IMR-90 (cell line): ENCODE measurements at regions of chr12 and their contacts with region 1.

Region 1: DNA sequence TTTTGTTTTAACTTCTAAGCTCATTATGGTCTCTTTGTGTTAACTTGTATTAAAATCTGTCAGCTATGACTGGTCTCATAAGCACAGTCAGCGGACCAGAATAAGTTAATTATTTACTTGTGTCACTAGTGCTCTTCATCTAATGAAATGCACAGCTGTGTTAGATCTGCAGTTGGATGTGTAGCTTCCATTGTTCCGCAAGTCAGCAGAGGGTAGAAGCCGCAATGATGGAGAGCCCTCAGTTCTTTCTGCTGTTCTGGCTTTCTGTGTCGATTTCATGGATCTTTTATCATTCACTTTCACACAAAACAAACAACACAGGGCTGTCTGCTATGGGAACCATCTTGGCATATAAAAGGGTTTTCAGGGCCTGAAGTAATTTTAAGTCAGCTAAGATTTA is 89.3 kb upstream of the RFX4 start:
- DNase-seq: no peak
- ATAC-seq: no peak
- H3K4me3 ChIP-seq: no peak overlapping the region
- H3K27ac ChIP-seq: no peak overlapping the region
- H3K4me1 ChIP-seq: no peaks in the 10 kb centered on the region
- H3K27me3 ChIP-seq: no peaks in the 10 kb centered on the region
- CTCF ChIP-seq: no peak
- POLR2A ChIP-seq: no peak
- RAD21 ChIP-seq: no peak

Region 2: DNA sequence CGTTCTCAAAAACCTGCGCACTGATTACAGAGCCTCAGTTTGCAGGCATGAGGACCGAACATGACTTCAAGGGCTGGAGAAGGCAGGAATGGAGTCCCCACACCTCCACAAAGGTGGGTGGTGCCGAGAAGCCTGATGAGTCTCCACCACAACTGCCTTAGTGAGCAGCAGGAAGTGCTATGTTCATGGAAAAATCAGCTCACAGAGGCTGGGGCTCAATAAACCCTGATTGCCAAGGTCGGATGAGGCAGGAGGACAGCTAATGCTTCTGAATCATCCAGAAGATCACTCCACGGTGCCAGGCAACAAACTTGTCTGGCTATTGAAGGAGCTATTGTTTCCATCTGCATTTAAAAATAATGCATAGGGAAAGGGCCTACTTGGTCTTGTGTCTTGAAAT is 1288.6 kb before region 1 on chr12:
- CTCF ChIA-PET with region 1: no interaction called
- POLR2A ChIA-PET with region 1: no interaction called
- dilution Hi-C with region 1: no loop called
- in situ Hi-C with region 1: no loop called
- intact Hi-C with region 1: no loop called
- DNase-seq: peak; percentile 84
- ATAC-seq: peak; percentile 40
- H3K4me3 ChIP-seq: no peak overlapping the region
- H3K27ac ChIP-seq: no peak overlapping the region
- H3K4me1 ChIP-seq: peaks cover 12% of the 10 kb centered on the region
- H3K27me3 ChIP-seq: no peaks in the 10 kb centered on the region
- CTCF ChIP-seq: no peak
- POLR2A ChIP-seq: no peak
- RAD21 ChIP-seq: no peak

Region 3: DNA sequence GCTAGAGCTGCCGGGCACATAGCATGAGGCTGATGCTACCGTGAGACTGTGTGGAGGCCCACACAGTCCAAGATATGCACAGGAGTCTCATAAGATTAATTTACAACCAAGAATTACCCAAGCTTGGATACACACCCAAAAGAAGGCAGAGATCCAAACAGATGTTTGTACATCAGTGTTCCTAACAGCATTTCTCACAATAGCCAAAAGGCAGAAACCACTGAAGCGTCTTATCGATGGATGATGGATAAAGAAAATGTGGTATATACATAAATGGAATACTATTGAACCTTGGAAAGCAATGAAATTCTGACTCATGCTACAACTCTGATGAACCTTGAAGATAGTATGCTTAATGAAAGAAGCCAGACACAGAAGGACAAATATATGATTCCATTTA is 240.2 kb after region 1 on chr12:
- CTCF ChIA-PET with region 1: no interaction called
- POLR2A ChIA-PET with region 1: no interaction called
- dilution Hi-C with region 1: no loop called
- in situ Hi-C with region 1: no loop called
- intact Hi-C with region 1: no loop called
- DNase-seq: no peak
- ATAC-seq: no peak
- H3K4me3 ChIP-seq: no peak overlapping the region
- H3K27ac ChIP-seq: no peak overlapping the region
- H3K4me1 ChIP-seq: no peaks in the 10 kb centered on the region
- H3K27me3 ChIP-seq: peaks cover 2% of the 10 kb centered on the region
- CTCF ChIP-seq: no peak
- POLR2A ChIP-seq: no peak
- RAD21 ChIP-seq: no peak

Region 4: DNA sequence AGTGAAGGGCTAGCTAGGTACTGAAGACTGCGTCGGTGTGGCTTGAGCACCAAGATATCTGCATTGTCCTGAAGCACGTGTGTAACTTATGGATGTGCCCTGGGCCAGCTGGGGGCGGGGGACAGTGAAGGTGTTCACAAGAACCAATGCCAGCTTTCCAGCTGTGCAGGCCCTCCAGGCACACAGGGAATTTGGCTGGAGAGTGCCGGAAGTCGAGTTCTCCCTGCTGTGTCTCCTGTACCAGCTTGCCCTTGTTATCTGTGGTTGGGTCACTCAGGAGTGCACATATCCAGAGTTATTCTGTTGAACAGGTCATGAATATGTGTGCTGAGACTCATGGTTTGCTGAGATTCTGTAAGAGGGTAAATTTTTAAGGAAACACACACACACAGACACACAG is 675.7 kb after region 1 on chr12:
- CTCF ChIA-PET with region 1: no interaction called
- POLR2A ChIA-PET with region 1: no interaction called
- dilution Hi-C with region 1: no loop called
- in situ Hi-C with region 1: no loop called
- intact Hi-C with region 1: no loop called
- DNase-seq: no peak
- ATAC-seq: no peak
- H3K4me3 ChIP-seq: no peak overlapping the region
- H3K27ac ChIP-seq: no peak overlapping the region
- H3K4me1 ChIP-seq: peaks cover 4% of the 10 kb centered on the region
- H3K27me3 ChIP-seq: no peaks in the 10 kb centered on the region; the same call in 1 of the 2 replicates
- CTCF ChIP-seq: no peak
- POLR2A ChIP-seq: no peak
- RAD21 ChIP-seq: no peak

Region 5: GRCh38 chr12:107411792-107412535 is 918.4 kb after region 1 on chr12:
- CTCF ChIA-PET with region 1: no interaction called
- POLR2A ChIA-PET with region 1: interaction called, 16 read pairs
- dilution Hi-C with region 1: no loop called
- in situ Hi-C with region 1: no loop called
- intact Hi-C with region 1: no loop called
- DNase-seq: peak; percentile 91
- ATAC-seq: peak; percentile 95
- H3K4me3 ChIP-seq: no peak overlapping the region
- H3K27ac ChIP-seq: peak overlapping the region; percentile 67
- H3K4me1 ChIP-seq: peaks cover 15% of the 10 kb centered on the region
- H3K27me3 ChIP-seq: no peaks in the 10 kb centered on the region
- CTCF ChIP-seq: no peak
- POLR2A ChIP-seq: no peak
- RAD21 ChIP-seq: no peak